ENCODE measurements at regions of chr12 and their contacts with region 1.

Region 1: GRCh38 chr12:50533203-50533584 is 28.4 kb downstream of the DIP2B start:
- DNase-seq: no peak
- ATAC-seq: no peak
- H3K4me3 ChIP-seq: no peak overlapping the region
- H3K27ac ChIP-seq: peak overlapping the region; percentile 66
- H3K4me1 ChIP-seq: peaks cover 33% of the 10 kb centered on the region
- H3K27me3 ChIP-seq: no peaks in the 10 kb centered on the region
- CTCF ChIP-seq: no peak

Region 2: DNA sequence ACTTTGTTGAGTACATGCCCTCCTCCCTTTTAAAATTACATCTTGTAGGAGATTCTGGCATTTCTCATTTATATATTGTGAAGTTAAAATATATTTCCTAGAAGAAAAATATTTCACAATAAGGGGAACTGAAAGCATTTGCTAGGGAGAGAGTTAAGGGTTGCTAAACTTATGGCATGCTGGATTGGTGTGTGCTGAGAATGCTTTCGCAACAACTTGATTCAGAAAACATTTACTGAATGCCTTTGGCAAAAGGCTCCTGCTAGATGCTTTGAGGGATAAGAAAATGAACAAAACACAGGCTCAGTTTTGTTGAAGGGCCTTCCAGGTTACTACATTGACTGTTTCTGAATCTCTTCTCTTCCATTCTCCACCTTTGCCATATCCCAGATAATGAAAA is 39.1 kb after region 1 on chr12:
- intact Hi-C with region 1: loop called in 1 of 2 experiments (anchors 5 kb)
- DNase-seq: no peak
- ATAC-seq: peak in 3 of 4 donors; percentile 83 to 88 (median 87)
- H3K4me3 ChIP-seq: no peak overlapping the region
- H3K27ac ChIP-seq: no peak overlapping the region
- H3K4me1 ChIP-seq: peaks cover 63% of the 10 kb centered on the region
- H3K27me3 ChIP-seq: no peaks in the 10 kb centered on the region
- CTCF ChIP-seq: no peak